ENCODE measurements at regions of chr16 and their contacts with region 1.

Region 1: GRCh38 chr16:59400830-59401229 is 666.7 kb upstream of the GOT2 start:
- DNase-seq: no peak
- ATAC-seq: no peak
- H3K4me3 ChIP-seq: no peak overlapping the region
- H3K4me3 Mint-ChIP-seq: no peak overlapping the region
- H3K27ac ChIP-seq: no peak overlapping the region
- H3K27ac Mint-ChIP-seq: no peak overlapping the region
- H3K4me1 ChIP-seq: no peaks in the 10 kb centered on the region
- H3K4me1 Mint-ChIP-seq: no peaks in the 10 kb centered on the region
- H3K27me3 ChIP-seq: no peaks in the 10 kb centered on the region
- H3K27me3 Mint-ChIP-seq: peaks cover 0 to 4% of the 10 kb centered on the region in 2 donors

Region 2: DNA sequence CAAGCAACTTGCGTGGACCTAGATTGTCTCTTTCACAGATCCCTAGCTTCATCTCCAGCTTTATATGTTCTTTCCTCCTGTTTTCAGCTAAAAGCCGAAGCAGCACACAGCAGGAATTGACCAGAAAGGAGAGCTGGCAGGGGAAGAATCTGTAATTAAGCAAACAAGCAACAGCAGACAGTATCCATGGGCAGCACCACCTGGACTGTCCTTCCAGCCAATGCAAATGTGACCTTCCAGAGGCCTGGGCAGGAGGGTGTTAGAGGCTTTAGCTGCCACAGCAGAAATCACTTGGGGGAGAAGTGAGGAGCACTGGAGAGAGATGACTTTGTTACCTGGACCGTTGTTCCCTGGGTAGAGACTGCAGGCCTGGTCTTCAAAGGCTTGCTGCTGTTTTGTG is 239.2 kb before region 1 on chr16:
- CTCF ChIA-PET with region 1: no interaction called
- POLR2A ChIA-PET with region 1: interaction called in 1 of 2 experiments, 10 read pairs
- DNase-seq: no peak
- ATAC-seq: no peak
- H3K4me3 ChIP-seq: no peak overlapping the region
- H3K4me3 Mint-ChIP-seq: no peak overlapping the region
- H3K27ac ChIP-seq: no peak overlapping the region
- H3K27ac Mint-ChIP-seq: no peak overlapping the region
- H3K4me1 ChIP-seq: no peaks in the 10 kb centered on the region
- H3K4me1 Mint-ChIP-seq: no peaks in the 10 kb centered on the region
- H3K27me3 ChIP-seq: no peaks in the 10 kb centered on the region
- H3K27me3 Mint-ChIP-seq: no peaks in the 10 kb centered on the region

Region 3: GRCh38 chr16:59373632-59374031 is 27.2 kb before region 1 on chr16:
- CTCF ChIA-PET with region 1: no interaction called
- POLR2A ChIA-PET with region 1: no interaction called
- DNase-seq: no peak
- ATAC-seq: no peak
- H3K4me3 ChIP-seq: no peak overlapping the region
- H3K4me3 Mint-ChIP-seq: no peak overlapping the region
- H3K27ac ChIP-seq: no peak overlapping the region
- H3K27ac Mint-ChIP-seq: no peak overlapping the region
- H3K4me1 ChIP-seq: no peaks in the 10 kb centered on the region
- H3K4me1 Mint-ChIP-seq: no peaks in the 10 kb centered on the region
- H3K27me3 ChIP-seq: no peaks in the 10 kb centered on the region
- H3K27me3 Mint-ChIP-seq: peaks cover 0 to 17% of the 10 kb centered on the region in 2 donors

Region 4: DNA sequence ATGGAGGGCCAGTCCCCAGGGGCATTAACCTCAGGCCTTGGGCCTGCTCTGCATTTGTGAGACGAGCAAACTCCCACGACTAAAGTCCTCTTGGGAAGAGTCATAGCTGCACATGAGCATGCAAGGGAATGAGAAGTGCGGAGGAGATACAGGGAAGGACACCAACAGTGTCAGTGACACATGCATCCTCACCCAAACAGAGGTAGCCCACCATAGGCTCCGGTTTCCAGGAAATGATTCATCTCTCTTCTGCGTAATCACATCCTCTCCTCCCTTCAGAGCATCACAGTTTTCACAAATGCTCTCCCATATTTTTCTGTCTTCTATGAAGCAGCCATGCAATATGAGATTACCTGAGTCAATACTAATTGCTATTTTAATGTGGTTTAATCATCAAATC is 59.0 kb after region 1 on chr16:
- CTCF ChIA-PET with region 1: no interaction called
- POLR2A ChIA-PET with region 1: no interaction called
- DNase-seq: no peak
- ATAC-seq: no peak
- H3K4me3 ChIP-seq: no peak overlapping the region
- H3K4me3 Mint-ChIP-seq: no peak overlapping the region
- H3K27ac ChIP-seq: no peak overlapping the region
- H3K27ac Mint-ChIP-seq: no peak overlapping the region
- H3K4me1 ChIP-seq: no peaks in the 10 kb centered on the region
- H3K4me1 Mint-ChIP-seq: no peaks in the 10 kb centered on the region
- H3K27me3 ChIP-seq: no peaks in the 10 kb centered on the region
- H3K27me3 Mint-ChIP-seq: no peaks in the 10 kb centered on the region

Region 5: GRCh38 chr16:59527206-59527997 is 126.6 kb after region 1 on chr16:
- CTCF ChIA-PET with region 1: no interaction called
- POLR2A ChIA-PET with region 1: no interaction called
- DNase-seq: no peak
- ATAC-seq: no peak
- H3K4me3 ChIP-seq: no peak overlapping the region
- H3K4me3 Mint-ChIP-seq: no peak overlapping the region
- H3K27ac ChIP-seq: no peak overlapping the region
- H3K27ac Mint-ChIP-seq: no peak overlapping the region
- H3K4me1 ChIP-seq: no peaks in the 10 kb centered on the region
- H3K4me1 Mint-ChIP-seq: no peaks in the 10 kb centered on the region
- H3K27me3 ChIP-seq: no peaks in the 10 kb centered on the region
- H3K27me3 Mint-ChIP-seq: no peaks in the 10 kb centered on the region

Region 6: DNA sequence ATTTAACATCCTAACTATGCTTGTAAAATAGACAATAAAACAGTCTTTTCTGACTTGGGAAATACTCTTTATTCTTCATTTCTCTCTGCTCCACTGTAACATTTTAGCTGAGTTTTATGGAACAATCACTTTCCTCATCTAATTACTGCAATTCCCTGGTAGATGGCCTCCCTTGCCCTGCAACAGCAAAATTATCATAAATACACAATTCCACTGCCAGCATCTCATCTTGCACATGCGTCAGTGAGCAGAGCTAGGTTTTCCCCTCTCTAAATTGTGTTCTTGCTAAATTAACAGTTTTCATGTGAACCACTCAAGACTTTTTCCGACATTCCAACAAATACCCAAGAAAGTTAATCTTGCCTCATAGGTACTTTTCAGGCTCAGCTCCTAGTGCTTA is 254.2 kb after region 1 on chr16:
- CTCF ChIA-PET with region 1: no interaction called
- POLR2A ChIA-PET with region 1: no interaction called
- DNase-seq: no peak
- ATAC-seq: no peak
- H3K4me3 ChIP-seq: no peak overlapping the region
- H3K4me3 Mint-ChIP-seq: no peak overlapping the region
- H3K27ac ChIP-seq: no peak overlapping the region
- H3K27ac Mint-ChIP-seq: no peak overlapping the region
- H3K4me1 ChIP-seq: no peaks in the 10 kb centered on the region
- H3K4me1 Mint-ChIP-seq: no peaks in the 10 kb centered on the region
- H3K27me3 ChIP-seq: no peaks in the 10 kb centered on the region
- H3K27me3 Mint-ChIP-seq: no peaks in the 10 kb centered on the region